ENCODE measurements at regions of chr19 and their contacts with region 1.

Region 1: GRCh38 chr19:29714953-29715700 is at the start of gene C19orf12:
- DNase-seq: peak; percentile 80
- ATAC-seq: peak; percentile 69
- H3K4me3 Mint-ChIP-seq: peak within 1 kb of the TSS; percentile 96
- H3K27ac Mint-ChIP-seq: peak within 1 kb of the TSS; percentile 98
- H3K4me1 Mint-ChIP-seq: peaks cover 53% of the 10 kb centered on the region
- H3K27me3 Mint-ChIP-seq: no peaks in the 10 kb centered on the region
- total RNA-seq, gene C19orf12: 43.6 to 44.1 TPM

Region 2: DNA sequence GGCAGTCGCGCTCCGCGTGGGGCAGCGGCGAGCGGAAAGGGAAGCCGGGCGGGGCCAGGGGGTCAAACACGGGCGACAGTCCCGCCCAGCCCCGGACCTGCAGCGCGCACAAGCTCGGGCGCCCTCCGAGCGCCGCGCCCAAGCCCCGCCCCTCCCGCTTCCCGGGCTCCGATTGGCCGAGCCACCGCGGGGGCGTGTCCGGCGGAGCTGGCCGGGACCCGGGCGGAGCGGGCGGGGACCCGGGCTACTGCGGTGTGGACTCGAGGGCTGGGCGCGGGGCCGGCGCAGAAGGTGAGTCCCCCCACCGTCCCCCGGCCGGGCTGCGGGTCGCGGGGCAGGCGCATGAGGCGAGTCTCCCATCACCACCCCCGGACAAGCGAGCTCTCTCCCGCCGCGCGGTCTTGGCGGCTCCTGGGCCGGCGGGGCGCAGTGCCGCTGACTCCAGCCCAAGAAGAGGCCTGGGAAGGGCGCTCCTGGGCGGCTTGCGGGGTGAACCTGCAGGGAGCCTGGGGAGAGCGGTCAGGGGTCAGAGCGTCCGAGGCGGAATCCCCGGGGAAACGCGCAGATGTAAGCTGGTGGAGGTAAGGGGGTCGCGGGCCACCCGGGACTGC is 49.8 kb before region 1 on chr19 and contains the start of gene PLEKHF1:
- CTCF ChIA-PET with region 1: interaction called, 109 read pairs
- DNase-seq: peak; percentile 91
- ATAC-seq: peak; percentile 86
- H3K4me3 Mint-ChIP-seq: peak within 1 kb of the TSS; percentile 85
- H3K27ac Mint-ChIP-seq: peak within 1 kb of the TSS; percentile 90
- H3K4me1 Mint-ChIP-seq: peaks cover 63% of the 10 kb centered on the region
- H3K27me3 Mint-ChIP-seq: no peaks in the 10 kb centered on the region
- total RNA-seq, gene PLEKHF1: 42.4 to 64.1 TPM

Region 3: DNA sequence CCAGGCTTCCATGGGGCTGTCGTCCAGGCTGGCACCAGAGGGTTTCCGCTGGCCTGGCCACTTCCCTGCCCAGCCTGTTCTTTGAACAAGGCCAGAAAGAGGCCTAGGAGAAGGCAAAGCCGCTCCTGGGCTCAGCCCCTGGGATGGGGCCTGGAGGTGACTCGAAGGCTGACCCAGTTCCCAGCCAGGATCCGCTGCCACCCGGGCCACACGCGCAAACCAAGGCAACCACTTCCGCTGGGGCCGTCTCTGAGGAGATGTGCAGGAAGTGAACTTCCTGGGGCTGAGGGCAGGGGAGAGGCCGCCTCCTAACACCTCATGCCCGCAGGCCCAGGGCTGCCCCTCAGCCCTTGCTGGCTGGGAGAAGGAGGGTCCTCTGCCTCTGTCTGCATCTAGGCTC is 34.7 kb before region 1 on chr19:
- CTCF ChIA-PET with region 1: interaction called, 11 read pairs
- DNase-seq: peak; percentile 95
- ATAC-seq: peak; percentile 89
- H3K4me3 Mint-ChIP-seq: peak overlapping the region; percentile 43
- H3K27ac Mint-ChIP-seq: peak overlapping the region; percentile 85
- H3K4me1 Mint-ChIP-seq: peaks cover 73% of the 10 kb centered on the region
- H3K27me3 Mint-ChIP-seq: no peaks in the 10 kb centered on the region

Region 4: GRCh38 chr19:29704562-29705558 is 10.3 kb before region 1 on chr19:
- CTCF ChIA-PET with region 1: interaction called, 40 read pairs
- DNase-seq: no peak
- ATAC-seq: peak; percentile 85
- H3K4me3 Mint-ChIP-seq: no peak overlapping the region
- H3K27ac Mint-ChIP-seq: peak overlapping the region; percentile 88
- H3K4me1 Mint-ChIP-seq: peaks cover 52% of the 10 kb centered on the region
- H3K27me3 Mint-ChIP-seq: no peaks in the 10 kb centered on the region

Region 5: DNA sequence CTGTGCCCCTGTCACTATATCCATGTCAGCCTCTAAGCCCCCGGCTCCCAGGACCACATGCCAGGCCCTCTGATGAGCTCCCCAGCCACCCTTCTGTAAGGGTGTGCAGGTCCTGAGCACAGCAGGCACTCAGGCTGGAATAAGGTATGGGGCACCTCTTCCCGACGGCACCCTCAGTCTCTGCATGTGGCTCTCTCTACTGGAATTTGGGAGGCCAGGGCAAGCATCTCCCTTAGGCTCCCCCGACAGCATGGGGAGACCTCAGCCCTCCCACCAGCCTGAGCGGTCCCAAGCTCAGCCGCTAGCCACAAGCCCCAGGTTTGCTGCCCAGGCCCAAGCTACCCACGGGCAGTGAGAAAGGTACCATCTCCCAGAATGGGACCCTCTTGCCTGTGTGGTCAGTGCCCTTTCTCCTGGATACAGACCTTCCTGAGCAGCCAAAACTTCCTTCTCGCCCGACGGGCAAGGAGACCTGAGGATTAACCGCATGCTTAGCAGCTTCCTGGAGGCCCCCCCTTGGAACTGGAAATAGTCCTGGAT is 22.4 kb after region 1 on chr19:
- CTCF ChIA-PET with region 1: no interaction called
- DNase-seq: no peak
- ATAC-seq: no peak
- H3K4me3 Mint-ChIP-seq: no peak overlapping the region
- H3K27ac Mint-ChIP-seq: no peak overlapping the region
- H3K4me1 Mint-ChIP-seq: no peaks in the 10 kb centered on the region
- H3K27me3 Mint-ChIP-seq: peaks cover 22% of the 10 kb centered on the region

Region 6: DNA sequence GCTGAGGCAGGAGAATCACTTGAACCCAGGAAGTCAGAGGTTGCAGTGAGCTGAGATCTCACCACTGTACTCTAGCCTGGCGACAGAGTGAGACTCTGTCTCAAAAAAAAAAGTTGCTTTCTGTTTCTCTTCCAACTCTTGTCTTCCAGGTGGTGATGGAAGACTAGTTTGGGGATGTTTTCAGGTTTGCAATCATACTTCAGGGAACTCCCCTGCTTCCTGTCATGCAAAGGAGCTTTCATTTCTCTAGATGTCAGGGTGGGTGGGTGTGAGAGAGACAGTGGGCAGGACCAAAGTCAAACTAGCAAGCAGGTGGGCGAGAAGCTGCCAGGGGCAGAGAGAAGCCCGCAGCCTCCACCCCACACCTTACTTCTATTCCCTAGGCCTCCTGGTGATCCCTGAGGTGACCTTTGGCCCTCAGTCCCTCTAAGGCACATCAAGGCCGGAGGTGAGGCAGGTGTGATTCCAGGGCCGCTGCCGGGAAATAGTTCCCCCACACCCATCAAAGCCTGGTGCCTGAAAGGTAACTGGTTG is 122.4 kb after region 1 on chr19:
- CTCF ChIA-PET with region 1: interaction called, 17 read pairs
- DNase-seq: peak; percentile 59
- ATAC-seq: peak; percentile 59
- H3K4me3 Mint-ChIP-seq: peak overlapping the region; percentile 59
- H3K27ac Mint-ChIP-seq: peak overlapping the region; percentile 94
- H3K4me1 Mint-ChIP-seq: peaks cover 41% of the 10 kb centered on the region
- H3K27me3 Mint-ChIP-seq: peaks cover 16% of the 10 kb centered on the region

Region 7: DNA sequence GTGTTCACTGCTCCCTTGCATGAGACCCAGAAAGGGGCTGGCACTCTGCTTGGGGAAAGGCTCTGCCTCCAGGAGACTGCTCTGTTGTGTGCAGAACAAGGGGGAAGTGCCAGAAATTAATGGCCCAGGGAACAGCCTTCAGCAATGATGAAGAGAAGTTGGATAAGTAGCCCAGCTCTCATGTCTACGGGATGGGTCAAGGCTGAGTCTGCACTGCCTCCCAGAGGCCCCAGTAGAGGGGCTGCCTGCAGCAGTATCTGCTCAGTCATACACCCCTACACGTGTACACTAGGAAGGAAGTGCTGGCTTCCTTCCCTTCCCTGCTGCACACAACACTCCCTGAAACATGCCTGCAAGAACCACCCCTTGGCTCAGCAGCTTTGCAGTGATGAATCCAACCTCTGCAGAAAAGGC is 172.3 kb after region 1 on chr19:
- CTCF ChIA-PET with region 1: no interaction called
- DNase-seq: peak; percentile 54
- ATAC-seq: peak; percentile 84
- H3K4me3 Mint-ChIP-seq: no peak overlapping the region
- H3K27ac Mint-ChIP-seq: no peak overlapping the region
- H3K4me1 Mint-ChIP-seq: peaks cover 22% of the 10 kb centered on the region
- H3K27me3 Mint-ChIP-seq: no peaks in the 10 kb centered on the region